ENCODE measurements at regions of chr20 and their contacts with region 1.

Region 1: GRCh38 chr20:1900321-1900801 is 5.2 kb downstream of the SIRPA start:
- DNase-seq: peak; percentile 79 to 81
- H3K4me3 ChIP-seq: no peak overlapping the region
- H3K4me3 Mint-ChIP-seq: no peak overlapping the region
- H3K27ac Mint-ChIP-seq: no peak overlapping the region
- H3K4me1 ChIP-seq: peaks cover 29% of the 10 kb centered on the region
- H3K4me1 Mint-ChIP-seq: peaks cover 25% of the 10 kb centered on the region
- H3K27me3 ChIP-seq: no peaks in the 10 kb centered on the region
- H3K27me3 Mint-ChIP-seq: no peaks in the 10 kb centered on the region
- CTCF ChIP-seq: peak; percentile 66 to 92

Region 2: GRCh38 chr20:1876975-1877608 is 23.3 kb before region 1 on chr20:
- CTCF ChIA-PET with region 1: no interaction called
- POLR2A ChIA-PET with region 1: no interaction called
- intact Hi-C with region 1: no loop called
- DNase-seq: peak in 1 of 2 experiments; percentile 24
- H3K4me3 ChIP-seq: no peak overlapping the region
- H3K4me3 Mint-ChIP-seq: no peak overlapping the region
- H3K27ac Mint-ChIP-seq: no peak overlapping the region
- H3K4me1 ChIP-seq: peaks cover 42% of the 10 kb centered on the region
- H3K4me1 Mint-ChIP-seq: peaks cover 43% of the 10 kb centered on the region
- H3K27me3 ChIP-seq: no peaks in the 10 kb centered on the region
- H3K27me3 Mint-ChIP-seq: no peaks in the 10 kb centered on the region
- CTCF ChIP-seq: no peak

Region 3: GRCh38 chr20:1920252-1920651 is 19.9 kb after region 1 on chr20:
- CTCF ChIA-PET with region 1: interaction called, 7 read pairs
- POLR2A ChIA-PET with region 1: no interaction called
- intact Hi-C with region 1: loop called (anchors 1 kb)
- DNase-seq: peak; percentile 75 to 86
- H3K4me3 ChIP-seq: no peak overlapping the region
- H3K4me3 Mint-ChIP-seq: peak overlapping the region; percentile 57
- H3K27ac Mint-ChIP-seq: peak overlapping the region; percentile 90
- H3K4me1 ChIP-seq: peaks cover 25% of the 10 kb centered on the region
- H3K4me1 Mint-ChIP-seq: peaks cover 12% of the 10 kb centered on the region
- H3K27me3 ChIP-seq: no peaks in the 10 kb centered on the region
- H3K27me3 Mint-ChIP-seq: no peaks in the 10 kb centered on the region
- CTCF ChIP-seq: no peak

Measured in Caco-2 (cell line).